ENCODE measurements at regions of chr15 and their contacts with region 1.

Region 1: DNA sequence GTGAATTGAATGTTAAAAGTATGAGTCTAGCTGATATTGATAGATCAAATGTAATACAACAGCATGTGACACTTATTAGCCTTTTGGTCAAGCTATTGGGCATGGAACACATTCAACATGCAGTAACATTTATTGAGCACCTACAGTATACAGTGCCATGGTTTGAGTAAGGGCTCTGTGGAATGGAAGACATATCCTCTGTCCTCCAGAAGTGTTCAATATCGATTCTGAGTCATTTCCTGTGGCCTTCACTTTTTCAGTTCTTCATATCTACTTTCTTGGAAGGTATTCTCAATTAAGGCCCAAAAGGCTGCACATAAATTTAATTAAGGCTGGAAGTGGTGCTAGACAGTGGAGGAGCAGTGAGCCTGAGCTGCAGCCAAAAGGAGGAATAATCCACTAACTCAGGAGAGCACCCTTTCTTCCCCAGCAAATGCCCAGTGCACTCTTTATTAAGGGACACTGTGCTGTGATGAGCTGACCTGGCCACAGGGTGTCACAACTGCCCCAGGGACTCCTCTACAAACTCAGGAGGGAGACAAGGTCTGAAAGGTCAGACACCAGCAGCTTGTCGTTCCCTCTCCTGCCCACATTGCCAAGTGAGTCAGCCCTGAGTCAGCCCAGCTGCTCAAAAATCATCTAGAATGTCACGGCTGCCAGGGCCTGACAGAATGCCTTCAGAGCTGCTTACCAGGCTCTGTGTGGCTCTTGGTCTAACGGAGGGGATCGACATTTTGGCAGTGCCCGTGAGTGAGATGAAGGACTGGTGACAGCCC is 544.8 kb downstream of the AGBL1 start:
- DNase-seq: peak; percentile 7 to 82 (median 30)
- H3K4me3 ChIP-seq: no peak overlapping the region
- H3K4me3 Mint-ChIP-seq: peak overlapping the region in 3 of 7 donors; percentile 5 to 19 (median 13)
- H3K27ac ChIP-seq: no peak overlapping the region
- H3K27ac Mint-ChIP-seq: peak overlapping the region in 5 of 8 donors; percentile 4 to 87 (median 13)
- H3K4me1 ChIP-seq: peaks cover 7% of the 10 kb centered on the region
- H3K4me1 Mint-ChIP-seq: peaks cover 11 to 47% (median 29%) of the 10 kb centered on the region in 3 donors
- H3K27me3 ChIP-seq: no peaks in the 10 kb centered on the region
- H3K27me3 Mint-ChIP-seq: peaks cover 0 to 1% of the 10 kb centered on the region in 2 donors

Region 2: DNA sequence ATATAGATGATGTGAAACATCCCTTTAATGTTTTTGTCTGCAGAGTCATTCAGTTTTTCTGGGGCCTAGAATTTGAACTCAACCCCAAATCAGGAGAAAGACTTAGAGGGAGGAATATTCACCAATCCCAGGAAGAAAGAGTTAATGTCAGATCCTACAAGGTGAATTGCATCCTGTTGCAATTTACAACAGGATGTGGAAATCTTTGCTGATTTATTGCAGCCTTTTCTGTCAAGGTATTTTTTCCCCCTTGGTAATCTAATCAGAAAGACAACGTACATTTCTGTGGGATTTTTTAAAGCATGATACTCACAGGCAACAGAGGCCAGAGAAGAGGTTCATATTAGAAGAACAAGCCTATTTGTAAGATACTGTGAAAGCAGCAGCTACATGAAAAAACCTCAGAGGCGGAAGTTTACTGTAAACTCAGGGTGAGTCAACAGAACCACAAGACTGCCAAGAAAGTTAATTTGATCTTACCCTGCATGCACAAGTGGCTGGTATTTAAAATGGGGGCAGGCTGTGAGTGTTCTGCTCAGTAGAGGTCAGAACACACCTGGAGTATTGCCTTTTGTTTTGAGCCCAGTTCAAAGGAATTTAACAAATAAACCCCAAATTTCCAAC is 12.9 kb before region 1 on chr15:
- CTCF ChIA-PET with region 1: interaction called, 15 read pairs
- POLR2A ChIA-PET with region 1: interaction called, 4 read pairs
- DNase-seq: peak in 3 of 5 donors; percentile 5 to 67 (median 46)
- H3K4me3 ChIP-seq: no peak overlapping the region
- H3K4me3 Mint-ChIP-seq: peak overlapping the region in 6 of 7 donors; percentile 6 to 50 (median 36)
- H3K27ac ChIP-seq: no peak overlapping the region
- H3K27ac Mint-ChIP-seq: peak overlapping the region; percentile 48 to 90 (median 76)
- H3K4me1 ChIP-seq: peaks cover 50% of the 10 kb centered on the region
- H3K4me1 Mint-ChIP-seq: peaks cover 53 to 73% (median 72%) of the 10 kb centered on the region in 3 donors
- H3K27me3 ChIP-seq: no peaks in the 10 kb centered on the region
- H3K27me3 Mint-ChIP-seq: peaks cover 0 to 5% of the 10 kb centered on the region in 2 donors

Region 3: DNA sequence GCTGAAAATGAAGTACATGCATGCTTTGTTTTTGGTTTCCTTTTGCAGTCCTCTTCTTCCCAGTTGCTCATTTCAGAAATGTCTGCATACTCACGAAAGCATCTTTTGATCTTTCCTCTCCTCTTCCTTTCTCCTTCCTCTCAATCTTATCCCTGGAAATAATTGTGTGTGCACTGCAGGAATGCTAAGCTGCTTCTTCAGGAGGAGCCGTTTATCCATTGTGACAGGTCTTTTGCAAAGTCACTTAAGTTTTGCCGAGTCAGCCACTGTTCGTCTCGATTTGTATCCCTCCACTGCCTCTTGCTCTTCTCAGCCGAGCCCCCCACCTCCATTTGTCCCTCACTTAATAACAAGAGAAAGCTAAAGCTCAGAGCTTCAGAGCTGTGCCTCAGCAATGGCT is 52.8 kb after region 1 on chr15:
- CTCF ChIA-PET with region 1: no interaction called
- POLR2A ChIA-PET with region 1: no interaction called
- DNase-seq: no peak
- H3K4me3 ChIP-seq: no peak overlapping the region
- H3K4me3 Mint-ChIP-seq: peak overlapping the region in 3 of 7 donors; percentile 2 to 59 (median 31)
- H3K27ac ChIP-seq: no peak overlapping the region
- H3K27ac Mint-ChIP-seq: no peak overlapping the region
- H3K4me1 ChIP-seq: no peaks in the 10 kb centered on the region
- H3K4me1 Mint-ChIP-seq: peaks cover 0 to 12% (median 5%) of the 10 kb centered on the region in 3 donors
- H3K27me3 ChIP-seq: no peaks in the 10 kb centered on the region
- H3K27me3 Mint-ChIP-seq: peaks cover 0 to 6% of the 10 kb centered on the region in 2 donors

Region 4: DNA sequence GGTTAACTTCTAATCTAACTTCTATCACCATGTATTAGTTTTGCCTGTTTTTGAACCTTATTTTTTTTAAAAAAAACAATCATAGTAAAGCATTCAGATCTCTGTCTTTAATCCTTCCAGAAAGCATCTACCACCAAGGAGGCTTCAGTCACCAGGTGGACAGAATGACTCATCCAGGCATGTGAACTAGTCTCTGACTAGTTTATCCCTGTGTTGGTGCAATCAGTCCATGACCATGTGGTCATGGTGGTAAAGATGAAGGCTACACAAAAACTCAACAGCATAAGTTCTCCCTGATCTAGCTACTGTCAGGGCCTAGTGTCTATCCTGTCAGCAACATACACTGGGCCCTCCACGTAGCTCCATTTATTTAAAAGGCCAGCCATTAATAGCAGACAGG is 205.9 kb after region 1 on chr15:
- CTCF ChIA-PET with region 1: no interaction called
- POLR2A ChIA-PET with region 1: no interaction called
- DNase-seq: no peak
- H3K4me3 ChIP-seq: no peak overlapping the region
- H3K4me3 Mint-ChIP-seq: no peak overlapping the region
- H3K27ac ChIP-seq: no peak overlapping the region
- H3K27ac Mint-ChIP-seq: no peak overlapping the region
- H3K4me1 ChIP-seq: no peaks in the 10 kb centered on the region
- H3K4me1 Mint-ChIP-seq: no peaks in the 10 kb centered on the region
- H3K27me3 ChIP-seq: no peaks in the 10 kb centered on the region
- H3K27me3 Mint-ChIP-seq: peaks cover 0 to 2% of the 10 kb centered on the region in 2 donors